GM10248 (cell line): ENCODE measurements at regions of chr2 and their contacts with region 1.

Region 1: GRCh38 chr2:121558329-121558728 is 27.6 kb downstream of the RNU4ATAC start:
- DNase-seq: no peak
- CTCF ChIP-seq: no peak

Region 2: DNA sequence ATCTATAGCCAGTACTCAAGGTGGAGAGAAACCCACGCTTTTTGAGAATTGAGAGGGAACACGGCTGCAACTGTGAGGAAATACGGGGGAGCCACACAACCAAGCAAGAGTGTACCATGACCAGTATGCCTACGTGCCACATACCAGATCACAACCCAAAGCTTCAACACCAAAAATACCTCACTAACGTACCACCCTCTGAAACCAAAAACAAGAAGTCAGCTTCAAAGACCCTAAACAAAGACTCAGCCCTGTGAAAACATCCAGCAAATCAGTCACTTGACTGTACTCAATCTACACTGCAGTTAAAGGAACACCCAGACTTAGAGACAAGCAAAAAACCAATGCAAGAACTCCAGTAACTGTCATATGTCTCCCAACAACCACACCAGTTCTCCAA is 10.7 kb before region 1 on chr2:
- CTCF ChIA-PET with region 1: interaction called, 26 read pairs
- POLR2A ChIA-PET with region 1: no interaction called
- DNase-seq: no peak
- CTCF ChIP-seq: no peak

Region 3: DNA sequence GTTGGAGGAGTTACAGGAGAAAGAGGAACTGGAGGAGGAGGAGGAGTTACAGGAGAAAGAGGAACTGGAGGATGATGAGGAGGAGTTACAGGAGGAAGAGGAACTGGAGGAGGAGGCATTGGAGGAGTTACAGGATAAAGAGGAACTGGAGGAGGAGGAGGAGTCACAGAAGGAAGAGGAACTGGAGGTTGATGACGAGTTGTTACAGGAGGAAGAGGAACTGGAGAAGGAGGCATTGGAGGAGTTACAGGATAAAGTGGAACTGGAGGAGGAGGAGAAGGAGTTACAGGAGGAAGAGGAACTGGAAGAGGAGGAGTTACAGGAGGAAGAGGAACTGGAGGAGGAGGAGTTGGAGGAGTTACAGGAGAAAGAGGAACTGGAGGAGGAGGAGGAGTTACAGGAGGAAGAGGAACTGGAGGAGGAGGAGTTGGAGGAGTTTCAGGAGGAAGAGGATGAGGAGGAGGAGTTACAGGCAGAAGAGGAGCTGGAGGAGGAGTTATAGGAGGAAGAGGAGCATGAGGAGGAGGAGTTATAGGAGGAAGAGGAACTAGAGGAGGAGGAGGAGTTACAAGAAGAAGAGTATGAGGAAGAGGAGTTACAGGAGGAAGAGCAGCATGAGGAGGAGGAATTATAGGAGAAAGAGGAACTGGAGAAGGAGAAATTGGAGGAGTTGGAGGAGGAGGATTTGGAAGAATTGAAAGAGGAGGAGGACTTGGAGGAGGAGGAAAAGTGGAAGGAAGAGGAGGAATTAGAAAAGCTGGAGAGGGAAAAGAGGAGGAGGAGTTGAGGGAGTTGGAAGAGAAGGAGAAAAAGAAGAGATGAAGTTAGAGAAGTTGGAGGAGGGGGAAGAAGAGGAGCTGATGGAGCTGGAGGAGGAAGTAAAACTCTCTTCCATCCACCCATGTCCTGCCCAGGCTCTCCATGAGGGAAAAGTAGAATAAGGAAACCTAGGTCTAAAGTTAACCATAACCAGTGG is 53.7 kb after region 1 on chr2:
- CTCF ChIA-PET with region 1: no interaction called
- POLR2A ChIA-PET with region 1: no interaction called
- DNase-seq: no peak
- CTCF ChIP-seq: no peak